ENCODE measurements at regions of chr7 and their contacts with region 1.

Region 1: GRCh38 chr7:27576360-27576944 is 86.2 kb downstream of the HIBADH start:
- DNase-seq: peak; percentile 79

Region 2: DNA sequence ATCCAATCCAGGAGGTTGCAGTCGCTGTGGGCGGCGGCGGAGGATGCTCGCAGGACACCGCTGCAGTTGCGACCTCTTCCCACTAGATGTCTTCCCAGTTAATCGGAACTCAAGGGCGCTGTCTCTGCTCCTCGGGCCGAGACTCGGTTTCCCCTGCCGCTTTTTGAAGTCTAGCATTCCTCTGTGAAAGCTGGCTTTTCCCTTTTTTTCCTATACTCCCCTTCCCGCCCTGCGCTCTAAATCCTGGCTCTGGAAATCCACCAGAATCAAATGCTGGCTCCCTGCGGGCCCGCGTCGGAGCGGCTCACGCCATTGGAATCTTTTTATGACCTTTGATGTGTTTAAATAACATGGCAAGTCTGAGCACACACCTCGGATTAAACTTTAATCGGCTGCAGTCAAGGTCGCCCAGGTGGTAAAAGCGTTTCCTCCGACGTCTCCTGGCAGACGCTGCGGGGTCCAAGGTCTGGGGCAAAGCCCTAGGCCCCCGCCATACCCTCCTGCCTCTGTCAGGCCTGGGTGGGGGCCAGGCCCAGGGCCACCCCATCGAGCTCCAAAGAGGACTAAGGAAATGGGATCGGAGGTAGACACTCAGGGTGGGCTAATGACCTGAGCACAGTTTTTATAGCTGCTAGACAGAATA is 365.9 kb before region 1 on chr7:
- in situ Hi-C with region 1: loop called (anchors 25 kb)
- DNase-seq: peak; percentile 73

Measured in SK-MEL-5 (cell line).